ENCODE measurements at regions of chr9 and their contacts with region 1.

Region 1: GRCh38 chr9:29211580-29212396 is 1638.5 kb upstream of the C9orf72 start:
- DNase-seq: peak; percentile 72
- ATAC-seq: peak; percentile 25
- H3K4me3 Mint-ChIP-seq: peak overlapping the region; percentile 89
- H3K27ac Mint-ChIP-seq: no peak overlapping the region
- H3K4me1 Mint-ChIP-seq: peaks cover 42% of the 10 kb centered on the region
- H3K27me3 Mint-ChIP-seq: peaks cover 39% of the 10 kb centered on the region
- CTCF ChIP-seq: peak; percentile 91

Region 2: DNA sequence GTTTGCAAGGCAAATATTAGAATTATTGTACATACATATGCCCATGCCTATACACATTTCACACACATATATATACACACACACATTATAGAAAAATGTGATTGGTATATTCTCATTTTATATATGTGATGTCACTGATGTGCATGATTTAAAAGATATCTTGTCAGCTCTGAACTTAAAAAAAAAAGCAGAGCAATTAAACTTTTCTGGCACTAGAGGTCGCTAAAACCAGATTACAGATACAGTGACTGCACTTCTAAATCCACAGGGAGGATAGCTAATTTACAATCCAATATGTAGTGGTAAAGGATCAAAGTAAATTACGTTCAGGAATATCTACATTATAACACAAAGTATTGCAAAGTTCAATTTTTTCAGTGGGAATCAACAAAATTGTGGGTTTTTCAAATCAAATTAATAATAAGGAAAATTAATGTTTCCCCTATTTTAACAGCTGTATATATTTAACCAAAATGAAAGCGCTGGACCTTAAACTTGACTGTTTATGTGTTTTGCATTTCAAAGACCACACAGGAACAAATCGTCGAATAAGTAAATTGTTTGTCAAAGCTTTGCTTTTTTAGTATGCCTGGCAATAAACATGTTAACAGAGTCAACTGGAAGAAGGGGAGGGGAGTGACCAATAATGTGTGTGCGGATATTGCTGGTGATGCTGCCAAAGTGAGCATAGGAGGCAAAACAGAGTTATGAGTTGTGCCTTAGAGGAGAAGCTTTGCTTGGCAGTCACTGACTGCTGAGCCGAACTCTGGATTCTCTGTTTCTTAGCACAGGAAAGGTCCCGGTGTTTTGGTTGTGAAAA is 437.2 kb before region 1 on chr9:
- CTCF ChIA-PET with region 1: interaction called, 29 read pairs
- POLR2A ChIA-PET with region 1: interaction called, 3 read pairs
- DNase-seq: no peak
- ATAC-seq: peak; percentile 44
- H3K4me3 Mint-ChIP-seq: no peak overlapping the region
- H3K27ac Mint-ChIP-seq: no peak overlapping the region
- H3K4me1 Mint-ChIP-seq: peaks cover 23% of the 10 kb centered on the region
- H3K27me3 Mint-ChIP-seq: peaks cover 9% of the 10 kb centered on the region
- CTCF ChIP-seq: peak; percentile 27; the same call in 1 of the 2 replicates

Region 3: DNA sequence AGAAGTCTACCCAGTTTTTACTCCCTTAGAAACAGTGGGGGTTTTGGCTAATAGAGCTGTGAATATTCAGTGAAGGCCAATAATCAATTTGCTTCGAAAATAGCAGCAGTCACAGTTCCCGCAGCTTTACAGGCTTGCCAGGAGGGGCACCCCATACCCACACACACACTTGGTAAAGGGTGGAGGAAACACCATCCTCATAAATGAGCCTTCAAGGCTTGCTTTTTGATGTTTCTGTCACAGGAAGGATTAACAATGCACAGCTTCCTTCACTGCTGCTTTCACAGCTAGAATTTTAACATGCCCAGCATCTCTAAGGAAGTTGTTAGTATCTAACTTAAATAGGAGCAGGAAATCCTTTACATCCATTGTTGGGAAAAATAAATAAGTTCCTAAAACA is 391.0 kb before region 1 on chr9:
- CTCF ChIA-PET with region 1: interaction called, 19 read pairs
- POLR2A ChIA-PET with region 1: no interaction called
- DNase-seq: peak; percentile 17
- ATAC-seq: peak; percentile 87
- H3K4me3 Mint-ChIP-seq: peak overlapping the region; percentile 6; the same call in 1 of the 2 replicates
- H3K27ac Mint-ChIP-seq: peak overlapping the region; percentile 88
- H3K4me1 Mint-ChIP-seq: peaks cover 66% of the 10 kb centered on the region
- H3K27me3 Mint-ChIP-seq: peaks cover 3% of the 10 kb centered on the region; the same call in 1 of the 2 replicates
- CTCF ChIP-seq: no peak

Region 4: DNA sequence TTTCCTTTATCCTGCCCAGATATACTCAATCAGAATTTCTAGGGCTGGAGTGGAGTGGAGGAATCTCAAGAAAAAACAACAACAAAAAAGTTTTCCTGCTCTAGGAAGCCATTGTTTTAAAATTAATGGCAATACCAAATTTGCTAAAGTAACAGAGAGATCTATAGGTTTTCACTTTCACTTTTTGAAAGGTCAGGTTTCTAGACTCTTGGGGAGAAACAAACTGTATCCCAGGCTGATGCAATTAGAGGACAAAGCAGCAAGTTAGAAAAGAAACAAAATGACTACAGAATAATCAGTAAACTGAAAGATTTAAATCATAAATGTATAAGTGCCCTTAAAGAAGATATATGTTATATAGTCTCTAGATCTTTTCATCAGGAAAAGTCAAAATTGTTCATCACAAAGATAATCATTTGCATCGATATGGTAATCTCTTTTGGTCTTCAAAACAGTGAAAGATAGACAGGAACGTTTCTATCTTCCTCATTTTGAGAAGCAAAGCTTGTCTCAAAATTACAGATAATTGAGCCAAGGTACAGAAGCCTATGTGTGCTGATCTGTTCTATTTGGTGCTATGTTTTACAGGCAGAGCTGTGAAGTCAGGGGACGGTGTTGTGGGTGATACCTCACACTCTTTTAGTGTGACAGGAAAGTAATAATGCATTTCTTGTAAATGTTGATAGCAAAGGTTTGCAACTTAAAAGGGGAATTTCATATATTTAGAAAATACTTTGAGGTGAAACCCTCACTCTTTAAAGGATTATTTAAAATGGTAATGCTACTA is 108.1 kb after region 1 on chr9:
- CTCF ChIA-PET with region 1: no interaction called
- POLR2A ChIA-PET with region 1: no interaction called
- DNase-seq: no peak
- ATAC-seq: no peak; the same call in 1 of the 2 replicates
- H3K4me3 Mint-ChIP-seq: no peak overlapping the region
- H3K27ac Mint-ChIP-seq: peak overlapping the region; percentile 5; the same call in 1 of the 2 replicates
- H3K4me1 Mint-ChIP-seq: peaks cover 40% of the 10 kb centered on the region
- H3K27me3 Mint-ChIP-seq: peaks cover 18% of the 10 kb centered on the region
- CTCF ChIP-seq: no peak

Measured in WTC11 (cell line).